Thyroid gland (tissue), 4 donors: ENCODE measurements at regions of chr9 and their contacts with region 1.

Region 1: GRCh38 chr9:133280392-133280791 is 5.4 kb upstream of the ABO start:
- DNase-seq: no peak
- H3K4me3 ChIP-seq: no peak overlapping the region
- H3K27ac ChIP-seq: no peak overlapping the region
- H3K4me1 ChIP-seq: no peaks in the 10 kb centered on the region
- H3K27me3 ChIP-seq: no peaks in the 10 kb centered on the region
- CTCF ChIP-seq: no peak
- POLR2A ChIP-seq: no peak

Region 2: DNA sequence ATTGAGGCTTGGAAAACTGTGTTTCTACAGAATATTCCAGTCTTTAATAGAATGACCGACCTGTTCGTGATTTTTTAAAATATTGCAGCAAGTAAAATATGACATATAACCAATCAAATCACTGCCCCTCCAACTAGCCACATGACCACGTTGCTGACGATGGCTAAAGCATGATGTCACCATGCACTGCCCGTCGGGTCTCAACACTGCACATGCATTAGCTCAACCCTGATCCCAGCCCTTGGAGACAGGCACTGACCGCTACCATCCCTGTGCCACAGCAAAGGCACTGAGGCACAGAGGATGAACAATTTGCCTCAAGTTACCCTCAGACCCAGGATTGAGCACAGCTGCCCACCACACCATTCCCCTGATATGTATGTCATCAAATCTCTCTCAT is 624.1 kb before region 1 on chr9:
- intact Hi-C with region 1: no loop called
- DNase-seq: no peak
- H3K4me3 ChIP-seq: no peak overlapping the region
- H3K27ac ChIP-seq: no peak overlapping the region
- H3K4me1 ChIP-seq: peaks cover 12 to 41% of the 10 kb centered on the region in 2 donors
- H3K27me3 ChIP-seq: no peaks in the 10 kb centered on the region
- CTCF ChIP-seq: no peak
- POLR2A ChIP-seq: no peak

Region 3: DNA sequence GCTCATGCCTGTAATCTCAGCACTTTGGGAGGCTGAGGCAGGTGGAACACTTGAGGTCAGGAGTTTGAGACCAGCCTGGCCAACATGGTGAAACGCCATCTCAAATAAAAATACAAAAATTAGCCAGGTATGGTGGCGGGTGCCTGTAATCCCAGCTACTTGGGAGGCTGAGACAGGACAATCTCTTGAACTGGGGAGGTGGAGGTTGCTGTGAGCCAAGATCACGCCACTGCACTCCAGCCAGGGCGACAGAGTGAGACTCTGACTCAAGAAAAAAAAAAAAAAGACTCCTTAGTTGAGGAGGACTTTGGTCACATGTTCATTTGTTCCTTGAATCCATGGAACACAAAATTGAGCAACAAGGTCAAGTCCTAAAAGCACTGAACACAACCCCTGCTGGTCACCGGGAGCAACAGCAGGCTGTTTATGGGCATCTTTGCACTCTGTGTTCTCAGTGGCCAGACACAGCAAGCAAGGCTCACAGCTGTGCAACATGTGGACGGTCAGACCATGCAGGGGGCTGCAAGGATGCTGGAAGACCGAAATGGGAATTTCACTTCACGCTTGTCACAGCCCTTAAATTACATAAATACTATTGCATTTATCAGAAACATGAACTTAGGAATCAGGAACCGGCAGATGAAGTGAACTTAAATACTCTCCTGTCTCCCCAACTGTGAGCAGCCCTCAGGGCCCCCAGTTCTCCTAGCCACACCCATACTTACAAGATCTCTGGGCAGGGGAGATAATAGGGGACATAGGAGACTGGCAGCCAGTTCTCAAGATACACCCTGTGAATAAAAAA is 119.4 kb before region 1 on chr9:
- intact Hi-C with region 1: no loop called
- DNase-seq: peak; percentile 64 to 72
- H3K4me3 ChIP-seq: no peak overlapping the region
- H3K27ac ChIP-seq: peak overlapping the region; percentile 33 to 48 (median 41)
- H3K4me1 ChIP-seq: peaks cover 15 to 27% of the 10 kb centered on the region in 2 donors
- H3K27me3 ChIP-seq: no peaks in the 10 kb centered on the region
- CTCF ChIP-seq: peak; percentile 44 to 72 (median 64)
- POLR2A ChIP-seq: no peak

Region 4: DNA sequence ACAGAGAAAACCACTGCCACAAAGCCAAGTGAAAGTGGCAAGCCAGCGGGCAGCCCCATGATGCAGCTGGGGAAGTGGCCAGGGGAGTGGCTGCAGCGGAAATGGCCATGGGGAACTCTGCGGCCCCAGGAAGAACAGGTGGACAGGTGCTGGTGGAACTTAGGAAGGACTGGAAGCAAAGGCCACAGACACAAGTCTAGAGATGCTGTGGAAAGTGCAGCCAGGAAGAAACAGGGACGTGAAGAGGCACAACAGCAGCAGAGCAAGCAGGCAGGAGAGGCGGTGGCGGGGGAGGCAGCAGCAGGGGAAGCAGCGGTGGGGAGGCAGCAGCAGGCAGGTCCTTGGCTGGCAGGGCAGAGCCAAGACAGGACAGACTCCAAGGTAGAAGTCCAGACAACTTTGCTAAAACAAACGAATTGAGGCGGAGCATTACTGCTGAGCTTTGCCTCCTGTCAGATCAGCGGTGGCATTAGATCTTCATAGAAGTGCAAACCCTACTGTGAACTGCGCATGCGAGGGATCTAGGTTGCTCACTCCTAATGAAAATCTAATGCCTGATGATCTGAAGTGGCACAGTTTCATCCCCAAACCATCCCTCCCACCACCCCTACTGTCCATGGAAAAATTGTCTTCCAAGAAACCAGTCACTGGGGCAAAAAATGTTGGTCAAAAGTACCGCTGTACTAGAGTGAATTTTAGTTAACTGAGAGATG is 43.8 kb after region 1 on chr9:
- intact Hi-C with region 1: loop called (anchors 2 kb)
- DNase-seq: no peak
- H3K4me3 ChIP-seq: no peak overlapping the region
- H3K27ac ChIP-seq: no peak overlapping the region
- H3K4me1 ChIP-seq: peaks cover 8 to 16% of the 10 kb centered on the region in 2 donors
- H3K27me3 ChIP-seq: no peaks in the 10 kb centered on the region
- CTCF ChIP-seq: no peak
- POLR2A ChIP-seq: no peak